ENCODE measurements at regions of chr5 and their contacts with region 1.

Region 1: GRCh38 chr5:6435356-6435755 is 13.3 kb upstream of the UBE2QL1 start:
- DNase-seq: peak; percentile 31 to 76
- H3K4me3 ChIP-seq: no peak overlapping the region
- H3K27ac ChIP-seq: no peak overlapping the region
- H3K4me1 ChIP-seq: no peaks in the 10 kb centered on the region
- H3K27me3 ChIP-seq: peaks cover 0 to 2% (median 0%) of the 10 kb centered on the region in 4 experiments; a peak in 2 of 7 replicates
- CTCF ChIP-seq: peak; percentile 78 to 89 (median 89)
- EP300 ChIP-seq: no peak
- POLR2A ChIP-seq: no peak
- RAD21 ChIP-seq: peak; percentile 78 to 81

Region 2: DNA sequence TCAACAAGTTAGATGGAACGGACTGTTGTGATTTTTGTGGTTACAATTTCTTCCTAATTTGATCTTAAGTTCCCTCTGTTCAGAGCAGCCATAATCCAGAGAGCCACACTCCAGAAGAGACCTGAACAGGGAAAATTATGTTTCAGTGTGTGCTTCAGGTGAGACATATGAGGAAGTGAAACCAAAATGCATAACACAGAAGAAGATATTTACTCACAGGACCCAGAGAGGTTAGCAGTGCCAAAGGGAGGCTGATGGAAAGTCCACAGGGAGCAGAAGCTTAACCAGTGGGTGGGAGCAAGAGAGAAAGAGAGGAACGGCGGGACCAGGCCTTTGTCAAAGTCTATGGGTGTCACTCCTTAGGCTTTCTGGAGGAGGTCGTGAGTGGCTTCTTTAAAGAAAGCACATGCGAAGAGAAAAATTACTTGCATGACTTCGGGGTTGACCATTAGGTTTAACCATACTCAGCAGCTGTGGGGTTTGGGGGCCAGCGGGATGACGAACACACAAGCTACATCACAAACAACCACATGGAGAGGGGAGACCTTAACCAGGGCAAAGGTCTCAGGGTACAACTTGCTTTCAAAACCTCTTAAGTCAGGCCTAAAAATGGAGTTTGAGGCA is 198.4 kb before region 1 on chr5:
- CTCF ChIA-PET with region 1: no interaction called
- POLR2A ChIA-PET with region 1: no interaction called
- DNase-seq: peak in 1 of 2 experiments; percentile 10
- H3K4me3 ChIP-seq: no peak overlapping the region
- H3K27ac ChIP-seq: no peak overlapping the region
- H3K4me1 ChIP-seq: no peaks in the 10 kb centered on the region
- H3K27me3 ChIP-seq: no peaks in the 10 kb centered on the region
- CTCF ChIP-seq: no peak
- EP300 ChIP-seq: no peak
- POLR2A ChIP-seq: no peak
- RAD21 ChIP-seq: no peak

Region 3: GRCh38 chr5:6446626-6447309 is 11.4 kb after region 1 on chr5:
- CTCF ChIA-PET with region 1: interaction called, 11 read pairs
- POLR2A ChIA-PET with region 1: no interaction called
- DNase-seq: no peak
- H3K4me3 ChIP-seq: no peak overlapping the region
- H3K27ac ChIP-seq: no peak overlapping the region
- H3K4me1 ChIP-seq: peaks cover 0 to 9% (median 4%) of the 10 kb centered on the region in 4 experiments; a peak in 4 of 7 replicates
- H3K27me3 ChIP-seq: peaks cover 23 to 54% (median 42%) of the 10 kb centered on the region in 4 experiments
- CTCF ChIP-seq: no peak
- EP300 ChIP-seq: no peak
- POLR2A ChIP-seq: no peak
- RAD21 ChIP-seq: no peak